GM10248 (cell line): ENCODE measurements at regions of chr14 and their contacts with region 1.

Region 1: GRCh38 chr14:93115069-93115820 is 480 bp downstream of the ITPK1 start:
- DNase-seq: peak; percentile 88
- CTCF ChIP-seq: no peak

Region 2: DNA sequence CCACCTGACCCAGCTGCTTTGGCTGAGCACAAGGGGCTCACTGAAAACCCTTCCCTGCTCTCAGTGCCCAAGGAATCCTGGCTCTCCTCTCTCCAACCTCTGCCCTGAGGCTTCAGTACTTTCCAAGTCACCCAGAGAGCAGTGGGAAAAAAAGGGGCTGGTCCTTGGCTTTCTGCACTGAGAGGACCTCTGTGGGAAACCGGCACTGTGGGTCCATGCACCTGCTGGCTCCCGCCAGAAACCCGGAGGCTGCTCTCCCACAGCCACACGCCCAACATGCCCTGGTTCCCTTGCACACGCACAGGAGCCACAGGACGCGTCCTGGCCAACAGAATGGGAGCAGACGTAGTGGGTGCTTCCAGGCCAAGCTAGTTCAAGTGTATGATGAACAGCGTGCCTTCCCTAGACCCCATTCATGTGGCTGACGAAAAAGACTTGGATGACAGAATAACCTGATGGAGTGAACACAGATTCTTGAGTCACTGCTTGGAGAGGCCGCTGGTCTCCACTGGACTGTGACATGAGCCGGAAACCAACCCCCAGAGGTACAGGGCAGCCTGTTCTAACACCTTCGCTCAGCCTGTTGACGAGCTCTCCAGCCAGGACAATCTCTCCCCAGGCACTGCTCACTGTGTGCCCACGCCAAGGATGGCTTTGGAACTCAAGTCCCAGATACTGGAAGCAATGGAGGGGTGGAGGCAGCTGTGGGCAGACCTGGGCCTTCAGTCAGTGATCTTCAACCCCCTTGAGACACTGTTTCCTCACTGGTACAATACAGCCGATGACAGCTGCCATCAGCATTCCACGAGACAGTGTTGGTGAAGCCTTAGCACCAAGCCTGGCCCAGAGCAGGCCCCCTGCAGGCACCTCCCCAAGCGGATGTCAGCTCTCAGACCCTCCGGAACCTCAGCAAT is 87.2 kb before region 1 on chr14:
- CTCF ChIA-PET with region 1: interaction called, 26 read pairs
- POLR2A ChIA-PET with region 1: no interaction called
- DNase-seq: no peak
- CTCF ChIP-seq: no peak

Region 3: GRCh38 chr14:93081876-93082570 is 33.2 kb before region 1 on chr14:
- CTCF ChIA-PET with region 1: interaction called, 11 read pairs
- POLR2A ChIA-PET with region 1: no interaction called
- DNase-seq: no peak
- CTCF ChIP-seq: no peak

Region 4: DNA sequence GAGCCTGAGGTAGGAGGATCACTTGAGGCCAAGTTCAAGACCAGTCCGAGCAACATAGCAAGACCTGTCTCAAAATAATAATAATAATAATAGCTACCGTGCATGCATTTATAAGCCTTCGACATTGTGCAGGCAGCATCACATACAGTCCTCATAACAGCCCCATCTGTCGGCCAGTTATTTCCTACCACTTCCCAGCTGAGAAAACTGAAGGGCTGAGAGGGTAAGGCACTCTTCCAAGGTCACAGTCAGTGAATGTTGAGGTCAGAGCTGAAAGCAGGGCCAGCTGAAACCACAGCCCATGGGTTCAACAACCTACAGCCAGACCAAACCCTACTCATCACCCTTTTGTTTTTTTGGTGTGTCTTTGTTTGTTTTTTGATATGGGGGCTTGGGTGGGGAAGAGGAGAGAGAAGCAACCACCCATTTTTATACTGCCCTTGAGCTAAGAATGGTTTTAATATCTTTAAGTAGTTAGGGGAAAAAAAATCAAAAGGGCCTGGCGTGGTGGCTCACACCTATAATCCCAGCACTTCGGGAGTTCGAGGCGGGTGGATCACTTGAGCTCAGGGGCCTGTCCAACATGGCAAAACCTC is 17.3 kb after region 1 on chr14:
- CTCF ChIA-PET with region 1: interaction called, 153 read pairs
- POLR2A ChIA-PET with region 1: no interaction called
- DNase-seq: no peak
- CTCF ChIP-seq: peak; percentile 49

Region 5: DNA sequence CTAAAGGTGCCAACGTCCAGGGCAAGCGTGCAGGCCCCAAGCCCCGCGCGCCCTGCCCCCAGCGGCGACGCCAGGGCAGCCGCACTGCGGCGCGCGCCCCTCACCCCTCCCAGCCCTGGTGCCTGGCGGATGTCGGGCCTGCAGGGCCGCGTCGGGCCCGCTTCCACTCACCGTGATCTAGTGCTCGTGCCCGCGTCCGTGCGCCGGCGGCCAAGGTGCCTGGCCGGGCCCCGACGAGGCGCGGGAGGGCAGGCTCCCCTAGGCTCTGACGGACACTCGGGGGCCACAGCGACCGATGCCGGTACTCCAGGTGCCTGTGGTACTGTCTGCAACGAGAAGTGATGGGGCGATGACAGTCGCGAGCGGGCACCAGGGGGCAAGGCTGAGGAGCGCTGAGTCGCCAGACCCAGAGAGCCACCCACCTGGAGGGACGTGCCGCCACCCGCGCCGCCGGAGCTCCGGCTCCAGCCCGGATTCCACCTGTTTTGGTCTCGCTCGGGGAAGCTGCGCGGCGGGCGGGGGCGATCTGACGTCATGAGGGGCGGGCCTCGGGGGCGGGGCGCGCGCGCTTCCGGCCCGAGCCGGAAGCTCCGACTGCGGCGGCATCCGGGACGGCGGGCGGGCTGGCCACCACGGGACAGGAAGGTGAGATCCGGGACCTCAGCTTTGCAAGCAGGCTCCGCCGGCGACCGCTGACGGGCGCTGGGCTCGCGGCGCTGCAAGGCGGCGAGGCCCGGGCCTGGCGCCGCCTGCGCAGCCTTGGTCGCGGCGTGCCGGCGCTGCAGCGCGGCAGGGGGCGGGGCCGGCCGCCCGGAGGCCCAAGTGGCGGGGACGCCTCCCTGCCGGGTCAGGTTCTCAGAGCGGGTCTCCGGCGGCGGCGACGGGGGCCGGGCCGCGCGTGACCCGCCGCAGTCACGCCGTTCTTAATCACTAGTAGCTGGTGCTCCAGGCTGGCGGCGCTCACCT is 69.4 kb after region 1 on chr14 and contains the starts of genes LYSET and MOAP1:
- CTCF ChIA-PET with region 1: interaction called, 21 read pairs
- POLR2A ChIA-PET with region 1: no interaction called
- DNase-seq: peak; percentile 94
- CTCF ChIP-seq: peak; percentile 27

Region 6: GRCh38 chr14:93332853-93333630 is 217.8 kb after region 1 on chr14 and contains the start of gene BTBD7:
- CTCF ChIA-PET with region 1: no interaction called
- POLR2A ChIA-PET with region 1: no interaction called
- DNase-seq: peak; percentile 98
- CTCF ChIP-seq: no peak